ENCODE measurements at regions of chr20 and their contacts with region 1.

Region 1: DNA sequence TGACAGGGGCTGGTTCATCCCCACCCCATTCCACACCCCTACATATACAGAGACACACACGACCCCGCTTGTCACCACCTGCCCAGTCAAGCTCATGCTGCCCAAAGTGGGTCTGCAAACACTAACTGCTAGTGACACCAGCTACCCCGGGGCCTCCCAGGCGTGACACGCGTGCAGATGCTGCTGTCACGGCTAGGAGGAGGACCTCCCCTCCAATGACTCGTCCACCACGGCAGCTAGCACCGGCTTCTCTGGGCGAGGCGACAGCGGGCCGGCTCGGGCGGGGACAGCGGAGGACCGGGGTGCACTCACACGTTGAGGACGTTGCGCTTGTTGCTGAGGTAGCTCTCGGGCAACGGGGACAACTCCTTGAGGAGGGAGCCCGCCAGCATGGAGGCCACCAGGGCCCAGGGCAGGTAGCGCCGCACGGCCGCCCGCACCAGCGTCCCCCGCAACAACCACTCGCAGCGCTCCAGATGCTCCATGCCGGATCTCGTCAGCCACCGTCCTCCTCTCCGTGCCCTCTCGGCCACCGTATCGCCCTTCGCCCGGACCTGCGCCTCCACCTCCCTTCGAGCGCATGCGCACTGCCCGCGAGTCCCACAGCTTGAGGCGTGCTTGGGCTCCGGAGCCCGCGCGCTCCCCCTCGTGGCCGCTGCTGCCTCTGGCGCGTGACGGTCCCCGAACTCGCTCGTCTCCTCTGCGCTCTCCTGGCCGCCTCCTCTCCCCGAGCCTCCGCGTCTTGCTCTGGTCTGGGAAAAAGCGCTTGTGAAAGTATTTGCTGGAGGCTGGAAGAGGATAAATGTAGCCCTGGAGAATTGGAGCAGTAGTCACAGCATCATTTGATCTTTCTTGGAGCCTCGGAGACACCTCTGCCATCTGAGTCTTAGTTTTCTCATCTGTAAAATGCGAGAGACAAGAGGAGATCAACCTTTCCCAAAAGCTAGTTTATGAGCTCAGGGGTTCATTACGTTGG is at the start of gene FITM2:
- DNase-seq: peak; percentile 99
- H3K4me3 Mint-ChIP-seq: peak within 1 kb of the TSS; percentile 92
- H3K27ac Mint-ChIP-seq: peak within 1 kb of the TSS; percentile 92
- H3K4me1 Mint-ChIP-seq: peaks cover 16% of the 10 kb centered on the region
- H3K27me3 Mint-ChIP-seq: peaks cover 3% of the 10 kb centered on the region
- total RNA-seq, gene FITM2: 2.0 and 2.8 TPM in 2 replicates

Region 2: GRCh38 chr20:44115762-44116644 is 194.9 kb before region 1 on chr20:
- intact Hi-C with region 1: loop called (anchors 5 kb)
- DNase-seq: no peak
- H3K4me3 Mint-ChIP-seq: no peak overlapping the region
- H3K27ac Mint-ChIP-seq: no peak overlapping the region
- H3K4me1 Mint-ChIP-seq: peaks cover 9% of the 10 kb centered on the region
- H3K27me3 Mint-ChIP-seq: peaks cover 26% of the 10 kb centered on the region

Region 3: DNA sequence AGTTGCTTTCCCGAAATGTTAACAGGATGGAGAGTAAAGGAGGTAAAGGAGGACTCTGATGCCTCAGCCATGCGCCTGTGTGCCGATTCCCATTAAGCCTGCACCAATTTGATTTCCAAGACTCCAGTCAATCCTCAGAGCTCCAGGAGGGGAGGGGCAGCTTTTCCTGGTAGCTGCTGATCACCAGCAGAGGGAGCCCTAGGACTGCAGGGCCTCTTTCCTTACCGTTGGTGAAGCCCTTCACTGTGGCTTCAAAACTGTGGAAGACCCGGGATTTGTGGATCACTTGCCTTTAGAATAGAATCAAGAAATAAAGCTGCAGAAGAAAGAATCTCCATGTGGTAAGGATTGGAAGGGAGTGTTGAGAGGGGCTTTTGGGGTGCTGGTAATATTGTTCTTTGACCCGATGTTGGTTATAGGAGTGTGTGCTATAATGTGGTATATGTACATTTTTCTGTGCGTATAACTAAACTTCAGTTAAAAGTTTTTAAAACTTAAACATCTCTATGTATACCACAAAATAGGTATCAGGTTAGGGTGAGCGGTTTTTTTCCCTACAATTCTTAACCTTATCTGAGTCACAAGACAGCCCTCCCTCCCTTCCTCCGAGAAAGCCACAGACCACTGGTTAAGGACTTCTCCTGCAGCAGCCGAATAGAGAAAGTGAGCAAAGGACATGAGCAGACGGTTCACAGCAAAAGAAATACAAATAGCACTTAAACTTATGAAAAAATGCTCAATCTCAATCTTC is 93.4 kb before region 1 on chr20:
- intact Hi-C with region 1: loop called (anchors 1 kb)
- DNase-seq: peak; percentile 92
- H3K4me3 Mint-ChIP-seq: peak overlapping the region; percentile 77
- H3K27ac Mint-ChIP-seq: peak overlapping the region; percentile 63
- H3K4me1 Mint-ChIP-seq: peaks cover 30% of the 10 kb centered on the region
- H3K27me3 Mint-ChIP-seq: no peaks in the 10 kb centered on the region

Region 4: GRCh38 chr20:44342248-44342647 is 31.3 kb after region 1 on chr20:
- intact Hi-C with region 1: no loop called
- DNase-seq: no peak
- H3K4me3 Mint-ChIP-seq: no peak overlapping the region
- H3K27ac Mint-ChIP-seq: no peak overlapping the region
- H3K4me1 Mint-ChIP-seq: no peaks in the 10 kb centered on the region
- H3K27me3 Mint-ChIP-seq: no peaks in the 10 kb centered on the region

Region 5: GRCh38 chr20:44475694-44476560 is 165.0 kb after region 1 on chr20 and contains the start of gene TTPAL:
- intact Hi-C with region 1: loop called (anchors 1 kb)
- DNase-seq: peak; percentile 98
- H3K4me3 Mint-ChIP-seq: peak within 1 kb of the TSS; percentile 99
- H3K27ac Mint-ChIP-seq: peak within 1 kb of the TSS; percentile 99
- H3K4me1 Mint-ChIP-seq: peaks cover 12% of the 10 kb centered on the region
- H3K27me3 Mint-ChIP-seq: no peaks in the 10 kb centered on the region
- total RNA-seq, gene TTPAL: 22.6 and 23.2 TPM in 2 replicates